ENCODE measurements at regions of chr11 and their contacts with region 1.

Region 1: GRCh38 chr11:62880803-62881578 is at the start of gene SLC3A2:
- DNase-seq: peak; percentile 93
- ATAC-seq: peak; percentile 77
- H3K4me3 ChIP-seq: peak within 1 kb of the TSS; percentile 66 to 93 (median 78)
- H3K4me3 Mint-ChIP-seq: peak within 1 kb of the TSS; percentile 100
- H3K27ac ChIP-seq: peak within 1 kb of the TSS; percentile 86 to 90
- H3K27ac Mint-ChIP-seq: peak within 1 kb of the TSS; percentile 100
- H3K4me1 ChIP-seq: peaks cover 25 to 36% of the 10 kb centered on the region in 2 donors
- H3K4me1 Mint-ChIP-seq: peaks cover 39% of the 10 kb centered on the region
- H3K27me3 ChIP-seq: no peaks in the 10 kb centered on the region
- H3K27me3 Mint-ChIP-seq: no peaks in the 10 kb centered on the region
- CTCF ChIP-seq: peak; percentile 87
- total RNA-seq, gene SLC3A2: 148 and 175 TPM in 2 replicates

Region 2: GRCh38 chr11:61891331-61892084 is 989.5 kb before region 1 on chr11 and contains the start of gene FADS3:
- CTCF ChIA-PET with region 1: no interaction called
- POLR2A ChIA-PET with region 1: no interaction called
- intact Hi-C with region 1: loop called (anchors 5 kb)
- DNase-seq: peak; percentile 96
- ATAC-seq: peak; percentile 61
- H3K4me3 ChIP-seq: peak within 1 kb of the TSS; percentile 13 to 84 (median 72)
- H3K4me3 Mint-ChIP-seq: peak within 1 kb of the TSS; percentile 94
- H3K27ac ChIP-seq: peak within 1 kb of the TSS; percentile 79 to 91
- H3K27ac Mint-ChIP-seq: peak within 1 kb of the TSS; percentile 96
- H3K4me1 ChIP-seq: peaks cover 18 to 29% of the 10 kb centered on the region in 2 donors
- H3K4me1 Mint-ChIP-seq: peaks cover 38% of the 10 kb centered on the region
- H3K27me3 ChIP-seq: no peaks in the 10 kb centered on the region
- H3K27me3 Mint-ChIP-seq: no peaks in the 10 kb centered on the region
- CTCF ChIP-seq: peak; percentile 47
- total RNA-seq, gene FADS3: 224 and 225 TPM in 2 replicates

Region 3: DNA sequence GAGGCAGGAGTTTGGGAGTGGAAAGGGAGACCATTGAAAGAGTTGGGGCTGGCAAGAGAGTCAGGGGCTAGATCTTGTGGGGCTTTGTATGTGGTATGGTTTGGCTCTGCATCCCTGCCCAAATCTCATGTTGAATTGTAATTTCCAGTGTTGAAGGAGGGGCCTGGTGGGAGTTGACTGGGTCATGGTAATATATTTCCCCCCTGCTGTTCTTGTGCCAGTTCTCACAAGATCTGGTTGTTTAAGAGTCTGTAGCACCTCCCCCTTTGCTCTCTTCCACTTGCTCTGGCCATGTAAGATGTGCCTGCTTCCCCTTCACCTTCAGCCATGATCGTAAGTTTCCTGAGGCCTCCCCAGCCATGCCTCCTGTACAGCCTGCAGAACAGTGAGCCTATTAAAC is 953.5 kb before region 1 on chr11:
- CTCF ChIA-PET with region 1: no interaction called
- POLR2A ChIA-PET with region 1: no interaction called
- intact Hi-C with region 1: no loop called
- DNase-seq: no peak
- ATAC-seq: no peak
- H3K4me3 ChIP-seq: no peak overlapping the region
- H3K4me3 Mint-ChIP-seq: no peak overlapping the region
- H3K27ac ChIP-seq: no peak overlapping the region
- H3K27ac Mint-ChIP-seq: no peak overlapping the region
- H3K4me1 ChIP-seq: no peaks in the 10 kb centered on the region
- H3K4me1 Mint-ChIP-seq: peaks cover 3% of the 10 kb centered on the region
- H3K27me3 ChIP-seq: peaks cover 0 to 3% (median 0%) of the 10 kb centered on the region in 4 experiments
- H3K27me3 Mint-ChIP-seq: peaks cover 21% of the 10 kb centered on the region
- CTCF ChIP-seq: no peak

Region 4: DNA sequence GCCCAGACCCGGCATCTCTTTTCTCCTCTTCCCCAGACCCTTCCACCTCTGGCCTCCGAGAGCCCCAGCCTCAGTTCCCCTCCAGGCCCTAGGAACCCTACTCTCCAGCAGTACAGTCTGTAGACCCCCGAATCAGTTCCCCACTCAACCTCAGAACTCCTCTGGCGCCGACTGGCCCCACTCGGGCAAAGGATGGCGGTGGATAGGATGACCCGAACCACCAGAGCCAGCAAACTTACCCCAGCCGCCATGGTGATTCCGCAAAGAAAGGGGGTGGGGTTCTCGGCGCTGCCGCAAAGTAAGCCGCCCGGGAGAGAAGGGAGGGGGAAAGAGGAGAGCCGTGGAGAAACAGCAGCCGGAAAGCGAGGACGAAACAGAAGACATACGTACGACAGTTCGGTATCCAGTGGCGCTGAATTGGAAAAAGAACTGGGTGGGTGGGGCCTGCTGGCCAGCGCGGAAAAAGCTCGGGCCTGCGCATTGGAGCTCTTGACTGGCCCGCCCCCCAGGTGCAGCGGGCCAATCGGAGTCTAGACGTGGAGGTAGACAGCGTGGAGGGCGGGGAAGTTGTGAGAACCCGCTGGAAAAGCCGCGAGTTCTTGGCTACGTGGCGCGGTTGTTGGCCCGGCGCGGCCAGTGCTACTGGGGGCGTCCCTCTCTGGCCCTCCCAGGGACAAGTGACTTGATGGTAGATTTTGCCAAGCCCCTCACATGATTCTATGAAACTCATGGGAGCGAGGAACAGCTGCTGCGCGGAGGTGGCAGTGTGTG is 307.2 kb before region 1 on chr11 and contains the start of gene EEF1G:
- CTCF ChIA-PET with region 1: no interaction called
- POLR2A ChIA-PET with region 1: no interaction called
- intact Hi-C with region 1: loop called (anchors 2 kb)
- DNase-seq: peak; percentile 99
- ATAC-seq: peak; percentile 93
- H3K4me3 ChIP-seq: peak within 1 kb of the TSS; percentile 74 to 99 (median 80)
- H3K4me3 Mint-ChIP-seq: peak within 1 kb of the TSS; percentile 92
- H3K27ac ChIP-seq: peak within 1 kb of the TSS; percentile 84 to 88
- H3K27ac Mint-ChIP-seq: peak within 1 kb of the TSS; percentile 95
- H3K4me1 ChIP-seq: peaks cover 12 to 25% of the 10 kb centered on the region in 2 donors
- H3K4me1 Mint-ChIP-seq: peaks cover 50% of the 10 kb centered on the region
- H3K27me3 ChIP-seq: no peaks in the 10 kb centered on the region
- H3K27me3 Mint-ChIP-seq: no peaks in the 10 kb centered on the region
- CTCF ChIP-seq: no peak
- total RNA-seq, gene EEF1G: 1,778 and 1,867 TPM in 2 replicates

Region 5: DNA sequence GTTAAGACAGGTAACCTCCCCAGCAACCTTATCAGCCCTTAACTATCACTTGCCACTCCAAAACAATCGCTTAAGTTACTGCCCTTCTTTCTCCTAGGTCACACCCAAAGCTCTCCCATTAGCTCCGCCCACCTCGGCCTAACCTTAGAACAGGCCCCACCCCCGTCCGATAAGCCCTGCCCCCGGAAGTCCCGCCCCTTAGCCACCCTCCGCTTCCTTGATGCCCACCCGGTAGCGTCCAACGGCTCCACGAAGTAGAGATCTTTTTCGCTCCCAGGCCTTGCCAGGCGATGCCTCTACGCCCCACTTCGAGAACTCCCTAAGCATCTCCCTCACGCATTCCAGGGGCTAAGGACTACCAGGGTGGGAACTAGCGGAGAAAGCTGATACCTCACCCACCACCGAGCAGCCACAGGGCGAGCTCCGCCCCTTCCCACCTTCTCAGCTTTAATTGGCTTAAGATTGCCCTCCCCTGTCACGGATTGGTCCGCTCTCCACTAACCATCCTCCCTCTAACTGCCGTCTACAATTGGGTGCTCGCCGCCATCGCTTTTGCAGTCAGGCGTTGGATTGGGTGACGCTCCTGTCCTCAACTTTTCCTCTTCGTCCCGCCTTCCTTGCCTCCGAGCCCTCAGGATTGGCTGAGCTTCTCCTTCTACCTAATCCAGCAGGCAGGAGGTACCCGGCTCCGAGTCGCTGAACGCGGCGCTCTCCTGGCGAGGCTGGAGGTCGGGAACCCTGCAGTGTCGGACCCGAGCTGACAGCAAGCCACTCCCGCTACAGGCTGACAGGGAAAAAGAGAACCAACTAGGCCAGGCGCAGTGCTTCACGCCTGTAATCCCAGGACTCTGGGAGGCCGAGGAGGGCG is 127.0 kb before region 1 on chr11 and contains the start of gene ZBTB3:
- CTCF ChIA-PET with region 1: no interaction called
- POLR2A ChIA-PET with region 1: interaction called, 12 read pairs
- intact Hi-C with region 1: loop called (anchors 1 kb)
- DNase-seq: peak; percentile 99
- ATAC-seq: peak; percentile 92
- H3K4me3 ChIP-seq: peak within 1 kb of the TSS; percentile 82 to 94 (median 86)
- H3K4me3 Mint-ChIP-seq: peak within 1 kb of the TSS; percentile 99
- H3K27ac ChIP-seq: peak within 1 kb of the TSS; percentile 80 to 84
- H3K27ac Mint-ChIP-seq: peak within 1 kb of the TSS; percentile 99
- H3K4me1 ChIP-seq: peaks cover 7 to 21% of the 10 kb centered on the region in 2 donors
- H3K4me1 Mint-ChIP-seq: peaks cover 27% of the 10 kb centered on the region
- H3K27me3 ChIP-seq: no peaks in the 10 kb centered on the region
- H3K27me3 Mint-ChIP-seq: no peaks in the 10 kb centered on the region
- CTCF ChIP-seq: no peak
- total RNA-seq, gene ZBTB3: 22.0 and 24.8 TPM in 2 replicates

Region 6: GRCh38 chr11:62841361-62842184 is 39.4 kb before region 1 on chr11:
- CTCF ChIA-PET with region 1: interaction called, 12 read pairs
- POLR2A ChIA-PET with region 1: interaction called, 52 read pairs
- intact Hi-C with region 1: loop called (anchors 2 kb)
- DNase-seq: peak; percentile 95
- ATAC-seq: peak; percentile 58
- H3K4me3 ChIP-seq: peak overlapping the region; percentile 61 to 97 (median 91)
- H3K4me3 Mint-ChIP-seq: no peak overlapping the region
- H3K27ac ChIP-seq: peak overlapping the region; percentile 99 to 100
- H3K27ac Mint-ChIP-seq: no peak overlapping the region
- H3K4me1 ChIP-seq: peaks cover 14 to 33% of the 10 kb centered on the region in 2 donors
- H3K4me1 Mint-ChIP-seq: peaks cover 18% of the 10 kb centered on the region
- H3K27me3 ChIP-seq: no peaks in the 10 kb centered on the region
- H3K27me3 Mint-ChIP-seq: no peaks in the 10 kb centered on the region
- CTCF ChIP-seq: no peak

Region 7: GRCh38 chr11:63212742-63213141 is 331.8 kb after region 1 on chr11:
- CTCF ChIA-PET with region 1: no interaction called
- POLR2A ChIA-PET with region 1: no interaction called
- intact Hi-C with region 1: no loop called
- DNase-seq: peak; percentile 15
- ATAC-seq: no peak
- H3K4me3 ChIP-seq: no peak overlapping the region
- H3K4me3 Mint-ChIP-seq: no peak overlapping the region
- H3K27ac ChIP-seq: no peak overlapping the region
- H3K27ac Mint-ChIP-seq: no peak overlapping the region
- H3K4me1 ChIP-seq: no peaks in the 10 kb centered on the region
- H3K4me1 Mint-ChIP-seq: no peaks in the 10 kb centered on the region
- H3K27me3 ChIP-seq: peaks cover 0 to 7% (median 0%) of the 10 kb centered on the region in 4 experiments
- H3K27me3 Mint-ChIP-seq: peaks cover 29% of the 10 kb centered on the region
- CTCF ChIP-seq: peak; percentile 36

Region 8: DNA sequence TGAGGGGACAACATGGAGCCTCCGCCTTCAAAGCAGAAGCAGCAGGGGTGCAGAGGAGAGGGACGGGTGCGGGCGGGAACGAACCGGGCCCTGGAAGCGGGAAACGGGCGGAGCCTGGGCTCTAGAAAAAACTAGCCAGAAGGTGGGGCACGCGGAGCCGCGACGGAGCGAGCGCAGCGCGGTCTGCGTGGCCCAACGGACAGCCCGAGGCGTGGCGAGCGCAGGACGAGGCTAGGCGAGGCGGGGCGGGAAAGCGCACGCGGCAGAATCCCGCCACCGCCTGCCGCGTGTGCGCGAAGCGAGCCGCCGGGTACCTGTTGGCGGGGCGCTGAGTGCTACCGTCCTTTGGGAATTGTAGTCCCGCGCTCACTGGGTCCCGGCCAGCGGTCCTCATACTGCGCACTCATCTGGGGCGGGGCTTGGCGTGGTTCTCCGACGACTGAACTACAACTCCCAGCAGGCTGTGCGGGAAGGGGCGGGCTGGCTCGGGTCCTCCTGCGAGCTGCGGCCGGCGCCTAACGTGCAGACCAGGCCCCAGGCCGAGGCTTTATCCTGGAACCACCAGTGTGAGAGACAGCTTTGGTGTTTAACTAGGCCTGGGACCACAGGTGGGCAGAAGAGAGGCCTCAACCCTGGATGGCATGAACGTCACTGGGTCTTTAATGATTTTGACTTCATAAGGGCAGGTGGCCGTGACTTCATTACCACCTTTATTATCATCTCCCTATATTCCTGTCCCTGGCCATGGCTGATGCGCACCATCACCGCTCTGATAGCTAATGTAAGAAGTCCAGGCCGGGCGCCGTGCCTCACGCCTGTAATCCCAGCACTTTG is 790.5 kb after region 1 on chr11 and contains the start of gene ATL3:
- CTCF ChIA-PET with region 1: no interaction called
- POLR2A ChIA-PET with region 1: no interaction called
- intact Hi-C with region 1: loop called (anchors 5 kb)
- DNase-seq: peak; percentile 97
- ATAC-seq: peak; percentile 92
- H3K4me3 ChIP-seq: peak within 1 kb of the TSS; percentile 22 to 81 (median 78)
- H3K4me3 Mint-ChIP-seq: peak within 1 kb of the TSS; percentile 88
- H3K27ac ChIP-seq: peak within 1 kb of the TSS; percentile 62 to 73
- H3K27ac Mint-ChIP-seq: peak within 1 kb of the TSS; percentile 92
- H3K4me1 ChIP-seq: peaks cover 9 to 13% of the 10 kb centered on the region in 2 donors
- H3K4me1 Mint-ChIP-seq: peaks cover 22% of the 10 kb centered on the region
- H3K27me3 ChIP-seq: no peaks in the 10 kb centered on the region
- H3K27me3 Mint-ChIP-seq: no peaks in the 10 kb centered on the region
- CTCF ChIP-seq: no peak
- total RNA-seq, gene ATL3: 33.8 and 36.5 TPM in 2 replicates

Measured in B cell (primary cell).